Endothelial cell of umbilical vein (primary cell): ENCODE measurements at regions of chr10 and their contacts with region 1.

Region 1: GRCh38 chr10:58641095-58641531 is 128.4 kb downstream of the BICC1 start:
- DNase-seq: no peak
- H3K4me3 ChIP-seq: no peak overlapping the region
- H3K27ac ChIP-seq: no peak overlapping the region
- H3K4me1 ChIP-seq: peaks cover 2% of the 10 kb centered on the region
- H3K27me3 ChIP-seq: no peaks in the 10 kb centered on the region
- CTCF ChIP-seq: peak in 1 of 2 donors; percentile 3
- POLR2A ChIP-seq: no peak

Region 2: DNA sequence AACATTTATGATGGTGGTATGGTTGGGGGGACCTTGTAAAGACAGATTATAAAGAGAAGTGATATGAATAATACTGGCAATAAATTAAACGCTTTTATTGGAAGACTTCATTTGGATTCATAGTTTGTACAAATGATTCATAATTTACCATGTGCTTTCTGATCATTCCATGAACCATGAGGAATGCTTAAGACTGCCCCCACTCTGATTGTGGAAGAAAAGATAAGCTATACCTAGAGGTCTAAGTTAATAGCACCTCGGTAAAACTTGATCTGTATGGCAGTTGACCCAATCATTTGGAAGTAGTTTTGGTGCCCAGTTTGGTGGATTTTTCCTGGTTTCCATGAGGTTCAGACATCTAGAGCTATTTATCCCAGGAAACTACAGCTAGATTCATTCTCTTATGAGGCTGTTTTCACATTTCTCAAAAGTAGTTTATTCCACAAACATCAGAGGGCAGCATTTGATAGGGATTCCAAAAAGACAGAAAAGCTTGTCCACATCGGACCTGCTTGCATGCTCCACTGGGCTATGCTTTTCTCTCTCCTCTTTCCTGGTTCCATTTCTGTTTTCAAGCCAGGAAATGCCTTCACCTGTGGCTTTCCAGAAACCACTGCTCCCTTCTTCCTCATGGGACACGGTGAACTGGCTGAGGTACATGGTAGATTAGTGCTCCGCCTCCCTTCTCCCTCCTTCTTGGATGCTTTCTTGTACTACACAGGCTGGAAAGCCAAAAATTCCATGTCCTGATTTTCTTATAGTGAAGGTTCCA is 226.7 kb before region 1 on chr10:
- CTCF ChIA-PET with region 1: no interaction called
- POLR2A ChIA-PET with region 1: no interaction called
- dilution Hi-C with region 1: no loop called
- intact Hi-C with region 1: loop called (anchors 1 kb)
- DNase-seq: no peak
- H3K4me3 ChIP-seq: no peak overlapping the region
- H3K27ac ChIP-seq: no peak overlapping the region
- H3K4me1 ChIP-seq: no peaks in the 10 kb centered on the region
- H3K27me3 ChIP-seq: no peaks in the 10 kb centered on the region
- CTCF ChIP-seq: no peak
- POLR2A ChIP-seq: no peak

Region 3: GRCh38 chr10:58618158-58618676 is 22.9 kb before region 1 on chr10:
- CTCF ChIA-PET with region 1: no interaction called
- POLR2A ChIA-PET with region 1: no interaction called
- dilution Hi-C with region 1: no loop called
- intact Hi-C with region 1: no loop called
- DNase-seq: no peak
- H3K4me3 ChIP-seq: no peak overlapping the region
- H3K27ac ChIP-seq: no peak overlapping the region
- H3K4me1 ChIP-seq: no peaks in the 10 kb centered on the region
- H3K27me3 ChIP-seq: no peaks in the 10 kb centered on the region
- CTCF ChIP-seq: no peak
- POLR2A ChIP-seq: no peak